Brain microvascular endothelial cell (primary cell): ENCODE measurements at regions of chr10 and their contacts with region 1.

Region 1: DNA sequence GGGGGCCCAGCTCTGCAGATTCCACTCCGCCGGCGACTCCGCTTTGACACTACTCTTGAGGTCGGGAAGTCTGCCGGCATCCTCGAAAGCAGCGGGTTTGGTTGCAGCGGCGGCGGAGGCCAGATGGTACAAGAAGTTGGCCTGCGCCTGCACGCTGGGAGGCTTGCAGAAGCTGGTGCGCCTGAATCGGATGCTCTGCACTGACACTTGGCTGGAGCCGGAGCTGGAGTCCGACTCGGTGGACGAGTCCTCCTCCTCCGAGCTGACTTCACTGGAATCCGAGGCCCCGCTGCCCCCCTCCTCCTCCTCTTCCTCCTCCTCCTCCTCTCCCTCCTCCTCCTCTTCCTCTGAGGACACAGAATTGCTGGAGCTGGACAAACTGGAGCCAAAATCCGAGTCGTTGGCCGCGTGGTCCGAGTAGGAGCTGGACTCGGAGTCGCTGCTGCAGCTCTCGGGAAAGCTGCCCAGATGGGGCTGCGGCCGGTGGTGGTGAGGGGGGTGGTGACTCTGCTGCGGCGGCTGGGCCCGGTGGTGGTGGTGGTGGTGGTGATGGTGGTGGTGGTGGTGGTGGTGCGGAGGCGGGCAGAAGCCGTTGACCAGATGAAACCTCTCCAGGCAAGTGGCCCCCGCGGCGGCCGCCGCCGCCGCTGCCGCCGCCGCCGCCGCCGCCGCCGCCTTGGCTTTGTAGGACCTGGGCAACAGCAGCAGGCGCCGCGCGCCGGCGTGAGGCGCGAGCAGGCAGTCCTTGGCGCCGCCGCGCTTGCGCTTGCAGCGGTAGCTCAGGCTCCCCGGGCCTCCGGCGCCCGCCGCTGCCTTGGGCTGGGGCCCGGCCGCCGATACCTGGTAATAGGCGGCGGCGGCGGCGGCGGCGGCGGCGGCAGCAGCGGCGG is 9.0 kb downstream of the SKIDA1 start:
- DNase-seq: no peak
- H3K4me3 ChIP-seq: peak overlapping the region; percentile 68
- H3K27ac ChIP-seq: no peak overlapping the region
- H3K27me3 ChIP-seq: no peaks in the 10 kb centered on the region
- CTCF ChIP-seq: no peak

Region 2: GRCh38 chr10:21278491-21279239 is 237.8 kb before region 1 on chr10:
- in situ Hi-C with region 1: loop called (anchors 25 kb)
- DNase-seq: peak; percentile 95
- H3K4me3 ChIP-seq: no peak overlapping the region
- H3K27ac ChIP-seq: no peak overlapping the region
- H3K27me3 ChIP-seq: no peaks in the 10 kb centered on the region
- CTCF ChIP-seq: peak; percentile 85

Region 3: GRCh38 chr10:21926949-21927348 is 410.5 kb after region 1 on chr10:
- in situ Hi-C with region 1: loop called (anchors 25 kb)
- DNase-seq: peak; percentile 94
- H3K4me3 ChIP-seq: no peak overlapping the region
- H3K27ac ChIP-seq: peak overlapping the region; percentile 85
- H3K27me3 ChIP-seq: no peaks in the 10 kb centered on the region
- CTCF ChIP-seq: no peak